ENCODE measurements at regions of chr1 and their contacts with region 1.

Region 1: GRCh38 chr1:24321697-24322469 is 2.7 kb downstream of the GRHL3 start:
- DNase-seq: peak; percentile 88
- H3K4me3 Mint-ChIP-seq: peak overlapping the region; percentile 67
- H3K27ac Mint-ChIP-seq: no peak overlapping the region
- H3K4me1 Mint-ChIP-seq: peaks cover 41% of the 10 kb centered on the region
- H3K27me3 Mint-ChIP-seq: peaks cover 73% of the 10 kb centered on the region

Region 2: GRCh38 chr1:24150234-24151174 is 171.4 kb before region 1 on chr1:
- CTCF ChIA-PET with region 1: interaction called, 3 read pairs
- intact Hi-C with region 1: loop called (anchors 5 kb)
- DNase-seq: peak; percentile 95
- H3K4me3 Mint-ChIP-seq: peak overlapping the region; percentile 63
- H3K27ac Mint-ChIP-seq: no peak overlapping the region
- H3K4me1 Mint-ChIP-seq: peaks cover 18% of the 10 kb centered on the region
- H3K27me3 Mint-ChIP-seq: peaks cover 32% of the 10 kb centered on the region

Region 3: GRCh38 chr1:24308365-24309015 is 13.4 kb before region 1 on chr1:
- CTCF ChIA-PET with region 1: no interaction called
- intact Hi-C with region 1: no loop called
- DNase-seq: no peak
- H3K4me3 Mint-ChIP-seq: no peak overlapping the region
- H3K27ac Mint-ChIP-seq: no peak overlapping the region
- H3K4me1 Mint-ChIP-seq: peaks cover 3% of the 10 kb centered on the region
- H3K27me3 Mint-ChIP-seq: peaks cover 6% of the 10 kb centered on the region

Region 4: DNA sequence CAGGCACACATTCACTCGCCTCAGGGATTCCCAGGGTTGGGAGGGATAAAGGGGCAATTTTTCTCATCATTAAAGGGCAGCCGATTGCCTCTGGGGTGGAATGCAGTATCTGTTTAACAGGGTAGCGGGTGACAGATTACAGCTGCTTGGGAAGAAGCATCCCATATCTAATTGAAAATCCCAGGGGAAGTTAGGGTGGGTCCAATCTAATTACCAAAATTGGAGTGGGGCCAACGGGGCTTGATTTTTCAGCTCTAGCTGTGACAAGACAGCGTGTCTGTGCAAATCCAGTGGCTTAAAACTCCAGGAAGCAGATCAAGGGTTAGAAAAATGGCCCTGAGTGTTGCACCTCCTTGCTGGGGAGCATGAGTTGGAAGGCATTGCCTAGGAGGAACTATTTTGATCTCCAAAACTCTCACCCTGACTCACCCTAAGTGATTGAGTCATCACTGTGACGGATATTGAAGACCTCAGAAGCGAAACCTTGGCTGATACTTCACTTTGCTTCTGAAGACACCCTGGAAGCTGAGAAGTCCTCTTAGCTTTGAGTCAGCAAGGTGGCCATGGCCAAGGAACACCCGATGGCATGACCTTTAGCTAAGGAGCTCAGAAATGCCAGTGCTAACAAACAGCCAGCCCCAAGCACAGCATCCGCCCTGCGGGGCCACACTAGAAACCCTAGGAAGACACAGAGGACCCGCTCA is 43.2 kb after region 1 on chr1:
- CTCF ChIA-PET with region 1: no interaction called
- intact Hi-C with region 1: loop called (anchors 1 kb)
- DNase-seq: peak; percentile 63
- H3K4me3 Mint-ChIP-seq: no peak overlapping the region
- H3K27ac Mint-ChIP-seq: no peak overlapping the region
- H3K4me1 Mint-ChIP-seq: peaks cover 12% of the 10 kb centered on the region
- H3K27me3 Mint-ChIP-seq: no peaks in the 10 kb centered on the region

Region 5: GRCh38 chr1:24642481-24643361 is 320.8 kb after region 1 on chr1 and contains the start of gene SRRM1:
- CTCF ChIA-PET with region 1: no interaction called
- intact Hi-C with region 1: loop called (anchors 2 kb)
- DNase-seq: peak; percentile 100
- H3K4me3 Mint-ChIP-seq: peak within 1 kb of the TSS; percentile 83
- H3K27ac Mint-ChIP-seq: peak within 1 kb of the TSS; percentile 98
- H3K4me1 Mint-ChIP-seq: peaks cover 48% of the 10 kb centered on the region
- H3K27me3 Mint-ChIP-seq: no peaks in the 10 kb centered on the region
- total RNA-seq, gene SRRM1: 226 to 235 TPM